ENCODE measurements at regions of chr22 and their contacts with region 1.

Region 1: GRCh38 chr22:41009202-41009943 is 58.2 kb downstream of the RBX1 start:
- DNase-seq: no peak
- ATAC-seq: peak in 1 of 2 donors; percentile 11
- H3K4me3 ChIP-seq: no peak overlapping the region
- H3K27ac ChIP-seq: no peak overlapping the region
- H3K4me1 ChIP-seq: no peaks in the 10 kb centered on the region
- H3K27me3 ChIP-seq: no peaks in the 10 kb centered on the region

Region 2: GRCh38 chr22:40973099-40973498 is 36.3 kb before region 1 on chr22:
- intact Hi-C with region 1: loop called in 1 of 4 experiments (anchors 5 kb)
- DNase-seq: no peak
- ATAC-seq: no peak
- H3K4me3 ChIP-seq: no peak overlapping the region
- H3K27ac ChIP-seq: no peak overlapping the region
- H3K4me1 ChIP-seq: peaks cover 2% of the 10 kb centered on the region
- H3K27me3 ChIP-seq: no peaks in the 10 kb centered on the region

Measured in right cardiac atrium (tissue), 5 donors.